ENCODE measurements at regions of chr9 and their contacts with region 1.

Region 1: DNA sequence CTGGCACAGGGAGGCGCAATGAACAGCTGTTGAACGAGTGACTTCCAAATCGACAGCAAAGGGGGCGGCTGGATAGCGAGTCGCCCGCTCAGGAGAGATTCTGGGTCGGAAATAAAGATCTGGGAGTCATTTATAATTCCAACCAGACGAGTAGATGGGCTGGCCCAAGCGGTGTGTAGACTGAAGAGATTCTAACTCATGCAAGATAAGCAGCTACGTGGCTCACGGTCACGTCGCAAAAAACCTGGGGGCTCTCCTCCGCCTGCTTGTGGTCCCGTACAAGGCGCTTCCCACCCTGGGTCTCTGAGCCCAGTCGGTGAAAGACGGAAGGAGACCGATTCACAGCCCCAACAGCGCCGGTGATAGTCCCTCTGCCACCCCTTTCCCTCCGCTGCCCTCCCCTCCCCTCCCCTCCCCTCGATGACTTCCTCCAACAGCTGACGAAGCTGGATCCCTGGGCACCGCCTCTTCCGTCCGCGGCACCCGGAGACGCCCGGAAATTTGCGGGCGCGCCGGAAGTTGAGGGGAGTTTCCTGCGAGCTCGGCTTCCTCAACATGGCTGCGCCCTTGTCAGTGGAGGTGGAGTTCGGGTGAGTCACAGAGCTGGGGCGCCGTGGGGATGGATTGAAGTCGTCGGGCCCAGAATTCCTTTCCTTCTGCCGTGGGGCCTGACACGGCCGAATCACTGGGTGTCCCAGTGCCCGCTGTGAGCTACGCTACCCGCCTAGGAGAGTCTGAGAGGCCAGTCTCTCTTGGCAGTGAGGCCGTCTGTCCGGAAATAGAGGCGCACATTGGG is at the start of gene URM1:
- DNase-seq: peak; percentile 98
- ATAC-seq: peak; percentile 98
- H3K4me3 Mint-ChIP-seq: peak within 1 kb of the TSS; percentile 87
- H3K27ac Mint-ChIP-seq: peak within 1 kb of the TSS; percentile 89
- H3K4me1 Mint-ChIP-seq: peaks cover 27% of the 10 kb centered on the region
- H3K27me3 Mint-ChIP-seq: no peaks in the 10 kb centered on the region
- total RNA-seq, gene URM1: 39.9 to 56.1 TPM

Region 2: GRCh38 chr9:128149001-128149701 is 221.9 kb before region 1 on chr9 and contains the start of gene LCN2:
- CTCF ChIA-PET with region 1: no interaction called
- POLR2A ChIA-PET with region 1: no interaction called
- intact Hi-C with region 1: no loop called
- DNase-seq: no peak
- ATAC-seq: no peak
- H3K4me3 Mint-ChIP-seq: no peak within 1 kb of the TSS
- H3K27ac Mint-ChIP-seq: no peak within 1 kb of the TSS
- H3K4me1 Mint-ChIP-seq: no peaks in the 10 kb centered on the region
- H3K27me3 Mint-ChIP-seq: no peaks in the 10 kb centered on the region
- total RNA-seq, gene LCN2: not detected

Region 3: GRCh38 chr9:128275996-128276573 is 94.9 kb before region 1 on chr9 and contains the starts of genes GOLGA2 and SWI5:
- CTCF ChIA-PET with region 1: interaction called, 3 read pairs
- POLR2A ChIA-PET with region 1: no interaction called
- intact Hi-C with region 1: loop called in 1 of 2 experiments (anchors 1 kb)
- DNase-seq: peak; percentile 100
- ATAC-seq: peak; percentile 99
- H3K4me3 Mint-ChIP-seq: peak within 1 kb of the TSS; percentile 97
- H3K27ac Mint-ChIP-seq: peak within 1 kb of the TSS; percentile 95
- H3K4me1 Mint-ChIP-seq: peaks cover 31% of the 10 kb centered on the region
- H3K27me3 Mint-ChIP-seq: no peaks in the 10 kb centered on the region
- total RNA-seq, gene GOLGA2: 28.4 to 29.4 TPM
- total RNA-seq, gene SWI5: 13.1 to 14.1 TPM

Region 4: GRCh38 chr9:128339771-128340690 is 31.0 kb before region 1 on chr9 and contains the start of gene SLC27A4:
- CTCF ChIA-PET with region 1: interaction called, 5 read pairs
- POLR2A ChIA-PET with region 1: no interaction called
- intact Hi-C with region 1: loop called in 1 of 2 experiments (anchors 1 kb)
- DNase-seq: peak; percentile 88
- ATAC-seq: peak; percentile 93
- H3K4me3 Mint-ChIP-seq: peak within 1 kb of the TSS; percentile 88
- H3K27ac Mint-ChIP-seq: peak within 1 kb of the TSS; percentile 83
- H3K4me1 Mint-ChIP-seq: peaks cover 6% of the 10 kb centered on the region
- H3K27me3 Mint-ChIP-seq: no peaks in the 10 kb centered on the region
- total RNA-seq, gene SLC27A4: 8.4 to 10.2 TPM

Region 5: DNA sequence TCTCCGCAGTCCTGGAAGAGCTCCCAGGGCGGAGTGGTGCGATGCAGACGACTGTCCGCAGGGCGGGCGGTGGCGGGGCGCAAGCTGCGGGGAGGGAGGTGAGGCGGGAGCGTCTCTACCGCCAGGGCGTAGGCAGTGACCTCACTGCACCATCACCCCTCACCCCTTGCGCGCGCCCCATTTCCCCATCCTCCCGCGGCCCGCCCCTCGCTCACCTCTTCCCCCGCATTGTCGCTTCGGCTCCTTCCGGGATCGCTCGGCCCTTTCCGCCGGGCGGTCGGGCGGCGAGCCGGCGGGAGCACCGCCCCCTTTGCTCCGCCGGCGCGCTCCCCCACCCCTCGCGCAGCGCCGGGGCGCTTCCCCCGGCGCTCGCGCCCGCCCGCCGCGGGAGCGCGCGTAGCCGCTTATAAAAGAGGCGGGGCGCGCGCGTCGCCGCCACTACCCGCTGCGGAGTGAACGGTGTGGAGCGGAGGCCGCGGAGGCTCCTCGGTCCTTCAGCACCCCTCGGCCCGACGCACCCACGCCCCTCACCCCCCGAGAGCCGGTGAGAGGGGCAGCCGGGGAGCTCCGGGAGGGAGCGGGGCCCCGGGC is 181.2 kb after region 1 on chr9 and contains the start of gene SPTAN1:
- CTCF ChIA-PET with region 1: no interaction called
- POLR2A ChIA-PET with region 1: interaction called, 3 read pairs
- intact Hi-C with region 1: loop called (anchors 1 to 5 kb)
- DNase-seq: peak; percentile 98
- ATAC-seq: peak; percentile 78
- H3K4me3 Mint-ChIP-seq: no peak within 1 kb of the TSS
- H3K27ac Mint-ChIP-seq: peak within 1 kb of the TSS; percentile 97
- H3K4me1 Mint-ChIP-seq: peaks cover 34% of the 10 kb centered on the region
- H3K27me3 Mint-ChIP-seq: no peaks in the 10 kb centered on the region
- total RNA-seq, gene SPTAN1: 192 to 269 TPM

Region 6: GRCh38 chr9:128771745-128772519 is 400.9 kb after region 1 on chr9 and contains the start of gene ZER1:
- CTCF ChIA-PET with region 1: no interaction called
- POLR2A ChIA-PET with region 1: no interaction called
- intact Hi-C with region 1: loop called in 1 of 2 experiments (anchors 1 kb)
- DNase-seq: peak; percentile 97
- ATAC-seq: peak; percentile 94
- H3K4me3 Mint-ChIP-seq: peak within 1 kb of the TSS; percentile 82
- H3K27ac Mint-ChIP-seq: peak within 1 kb of the TSS; percentile 86
- H3K4me1 Mint-ChIP-seq: peaks cover 18% of the 10 kb centered on the region
- H3K27me3 Mint-ChIP-seq: no peaks in the 10 kb centered on the region
- total RNA-seq, gene ZER1: 17.1 to 19.3 TPM

Region 7: GRCh38 chr9:129028192-129028957 is 657.4 kb after region 1 on chr9 and contains the start of gene SH3GLB2:
- CTCF ChIA-PET with region 1: no interaction called
- POLR2A ChIA-PET with region 1: no interaction called
- intact Hi-C with region 1: loop called in 1 of 2 experiments (anchors 2 kb)
- DNase-seq: peak; percentile 98
- ATAC-seq: peak; percentile 93
- H3K4me3 Mint-ChIP-seq: peak within 1 kb of the TSS; percentile 81
- H3K27ac Mint-ChIP-seq: peak within 1 kb of the TSS; percentile 52
- H3K4me1 Mint-ChIP-seq: peaks cover 17% of the 10 kb centered on the region
- H3K27me3 Mint-ChIP-seq: no peaks in the 10 kb centered on the region
- total RNA-seq, gene SH3GLB2: 49.1 to 53.7 TPM